GM12878 (cell line): ENCODE measurements at regions of chr4 and their contacts with region 1.

Region 1: GRCh38 chr4:161320377-161320776 is 843.4 kb downstream of the FSTL5 start:
- DNase-seq: no peak
- ATAC-seq: peak; percentile 98
- H3K4me3 ChIP-seq: no peak overlapping the region
- H3K27ac ChIP-seq: no peak overlapping the region
- H3K4me1 ChIP-seq: no peaks in the 10 kb centered on the region
- H3K27me3 ChIP-seq: no peaks in the 10 kb centered on the region
- CTCF ChIP-seq: peak; percentile 64 to 71 (median 64)
- EP300 ChIP-seq: no peak
- POLR2A ChIP-seq: no peak
- RAD21 ChIP-seq: peak; percentile 65

Region 2: GRCh38 chr4:161419822-161420221 is 99.4 kb after region 1 on chr4:
- CTCF ChIA-PET with region 1: interaction called, 9 read pairs
- POLR2A ChIA-PET with region 1: interaction called, 4 read pairs
- RAD21 ChIA-PET with region 1: interaction called, 5 read pairs
- SMC1A ChIA-PET with region 1: interaction called, 4 read pairs
- in situ Hi-C with region 1: no loop called
- intact Hi-C with region 1: loop called (anchors 1 kb)
- DNase-seq: no peak
- ATAC-seq: peak; percentile 97
- H3K4me3 ChIP-seq: no peak overlapping the region
- H3K27ac ChIP-seq: no peak overlapping the region
- H3K4me1 ChIP-seq: no peaks in the 10 kb centered on the region
- H3K27me3 ChIP-seq: no peaks in the 10 kb centered on the region
- CTCF ChIP-seq: peak in 2 of 3 experiments; percentile 30 to 48; a peak in 4 of 6 replicates
- EP300 ChIP-seq: no peak
- POLR2A ChIP-seq: no peak
- RAD21 ChIP-seq: peak; percentile 53

Region 3: GRCh38 chr4:161564230-161564834 is 244.0 kb after region 1 on chr4:
- CTCF ChIA-PET with region 1: no interaction called
- POLR2A ChIA-PET with region 1: no interaction called
- RAD21 ChIA-PET with region 1: no interaction called
- SMC1A ChIA-PET with region 1: interaction called, 3 read pairs
- in situ Hi-C with region 1: no loop called
- intact Hi-C with region 1: loop called (anchors 5 kb)
- DNase-seq: no peak
- ATAC-seq: no peak
- H3K4me3 ChIP-seq: no peak overlapping the region
- H3K27ac ChIP-seq: no peak overlapping the region
- H3K4me1 ChIP-seq: no peaks in the 10 kb centered on the region
- H3K27me3 ChIP-seq: no peaks in the 10 kb centered on the region
- CTCF ChIP-seq: peak in 1 of 3 experiments; percentile 15; a peak in 1 of 6 replicates
- EP300 ChIP-seq: no peak
- POLR2A ChIP-seq: no peak
- RAD21 ChIP-seq: no peak

Region 4: DNA sequence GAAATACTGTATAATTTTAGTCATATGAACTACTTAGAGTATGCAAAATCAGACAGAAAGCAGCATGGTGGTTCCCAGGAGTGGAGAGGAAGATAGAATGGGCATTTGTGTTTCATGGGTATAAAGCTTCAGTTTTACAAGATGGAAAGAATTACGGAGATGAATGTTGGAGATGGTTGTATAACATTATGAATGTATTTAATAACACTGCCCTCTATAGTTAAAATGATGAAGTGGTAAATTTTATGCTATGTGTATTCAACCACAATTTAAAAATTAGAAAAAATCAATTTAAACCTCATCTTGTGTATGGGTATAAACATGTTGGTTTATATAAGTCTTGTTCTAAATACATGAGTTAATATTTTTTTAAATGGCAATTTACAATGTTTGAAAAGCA is 322.3 kb after region 1 on chr4:
- CTCF ChIA-PET with region 1: interaction called, 5 read pairs
- POLR2A ChIA-PET with region 1: no interaction called
- RAD21 ChIA-PET with region 1: no interaction called
- SMC1A ChIA-PET with region 1: no interaction called
- in situ Hi-C with region 1: no loop called
- intact Hi-C with region 1: loop called (anchors 5 kb)
- DNase-seq: no peak
- ATAC-seq: peak; percentile 54
- H3K4me3 ChIP-seq: no peak overlapping the region
- H3K27ac ChIP-seq: no peak overlapping the region
- H3K4me1 ChIP-seq: no peaks in the 10 kb centered on the region
- H3K27me3 ChIP-seq: no peaks in the 10 kb centered on the region
- CTCF ChIP-seq: no peak; a peak in 1 of 6 replicates
- EP300 ChIP-seq: no peak
- POLR2A ChIP-seq: no peak
- RAD21 ChIP-seq: 0 out of 2 replicates have a peak, but pooled peaks have one; percentile 8

Region 5: GRCh38 chr4:161949946-161950725 is 629.8 kb after region 1 on chr4:
- CTCF ChIA-PET with region 1: interaction called, 15 read pairs
- POLR2A ChIA-PET with region 1: no interaction called
- RAD21 ChIA-PET with region 1: no interaction called
- SMC1A ChIA-PET with region 1: interaction called, 7 read pairs
- in situ Hi-C with region 1: no loop called
- intact Hi-C with region 1: loop called (anchors 5 kb)
- DNase-seq: no peak
- ATAC-seq: no peak
- H3K4me3 ChIP-seq: no peak overlapping the region
- H3K27ac ChIP-seq: no peak overlapping the region
- H3K4me1 ChIP-seq: no peaks in the 10 kb centered on the region
- H3K27me3 ChIP-seq: no peaks in the 10 kb centered on the region
- CTCF ChIP-seq: no peak
- EP300 ChIP-seq: no peak
- POLR2A ChIP-seq: no peak
- RAD21 ChIP-seq: no peak

Region 6: DNA sequence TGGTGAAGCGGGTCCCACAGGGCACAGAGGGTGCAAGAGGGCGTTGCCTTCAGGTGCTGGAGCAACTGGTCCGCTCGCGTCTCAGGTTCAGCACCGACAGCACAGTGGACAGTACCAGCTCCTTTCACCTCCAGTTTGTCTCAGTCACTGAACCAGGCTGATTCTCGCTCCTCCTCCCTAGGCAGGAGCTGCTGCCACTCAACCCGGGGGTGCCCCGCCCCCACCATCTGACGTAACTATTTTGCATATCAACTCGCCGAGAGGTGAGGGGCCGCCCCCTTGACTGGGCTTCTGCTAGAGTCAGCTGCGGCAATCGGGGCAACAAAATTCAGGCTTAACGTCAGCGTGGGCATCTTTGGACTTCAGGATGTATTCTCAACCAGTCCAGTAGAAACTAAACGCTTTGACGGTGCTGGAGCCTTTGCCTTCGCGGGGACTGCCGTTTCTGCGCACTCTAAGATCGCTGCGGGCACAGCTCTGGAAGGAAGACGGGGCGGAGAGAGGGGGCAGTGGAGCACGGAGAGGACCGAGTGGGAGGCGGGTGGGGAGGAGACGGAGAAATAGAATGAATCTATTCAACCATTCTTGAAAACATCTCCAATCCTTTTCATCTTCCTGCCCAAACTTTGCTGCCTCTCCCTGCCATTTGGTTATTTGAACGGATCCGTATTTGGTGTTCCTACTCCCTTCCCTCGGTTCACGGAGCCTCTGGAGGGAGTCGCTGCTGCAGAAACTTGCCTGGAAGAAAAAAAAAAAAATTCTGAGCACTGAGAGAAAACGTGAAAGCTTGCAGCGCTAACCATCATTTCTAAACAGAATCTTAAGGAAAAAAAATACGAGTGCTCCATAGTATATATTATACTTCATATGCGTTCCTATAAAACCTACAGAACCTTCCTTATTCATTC is 843.7 kb after region 1 on chr4 and contains the start of gene FSTL5:
- CTCF ChIA-PET with region 1: no interaction called
- POLR2A ChIA-PET with region 1: no interaction called
- RAD21 ChIA-PET with region 1: no interaction called
- SMC1A ChIA-PET with region 1: no interaction called
- in situ Hi-C with region 1: no loop called
- intact Hi-C with region 1: loop called (anchors 10 kb)
- DNase-seq: no peak
- ATAC-seq: peak; percentile 80
- H3K4me3 ChIP-seq: peak within 1 kb of the TSS; percentile 16; the same call in 1 of the 2 replicates
- H3K27ac ChIP-seq: no peak within 1 kb of the TSS
- H3K4me1 ChIP-seq: no peaks in the 10 kb centered on the region; the same call in 1 of the 2 replicates
- H3K27me3 ChIP-seq: no peaks in the 10 kb centered on the region
- CTCF ChIP-seq: no peak
- EP300 ChIP-seq: no peak
- POLR2A ChIP-seq: no peak
- RAD21 ChIP-seq: no peak
- polyA plus RNA-seq, gene FSTL5: 0.04 TPM in 1 of 2 experiments, not detected in the other